Naive thymus-derived CD4-positive, alpha-beta T cell (primary cell): ENCODE measurements at regions of chr3 and their contacts with region 1.

Region 1: DNA sequence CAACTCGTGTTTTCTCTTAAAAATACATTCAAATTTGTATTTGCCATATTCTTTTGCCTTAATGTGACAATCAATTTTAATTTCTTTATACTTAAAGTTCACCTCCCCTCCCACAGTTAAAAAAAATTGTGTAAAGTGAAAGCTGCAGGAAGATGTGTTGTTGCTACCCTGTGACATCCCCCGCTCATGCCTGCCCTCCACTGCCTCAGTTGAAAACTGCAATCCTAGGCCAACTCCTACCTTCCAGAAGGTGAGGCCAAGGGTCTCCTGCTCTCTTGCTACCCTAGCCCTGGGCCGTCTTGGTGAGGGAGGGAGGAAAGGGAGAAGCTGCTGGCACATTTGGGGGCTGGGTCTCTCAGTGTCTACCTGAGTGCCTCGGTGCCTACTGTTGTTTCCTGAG is 57.0 kb upstream of the CMTM7 start:
- DNase-seq: peak; percentile 15 to 72 (median 65)
- ATAC-seq: peak; percentile 83
- H3K4me3 ChIP-seq: no peak overlapping the region
- H3K4me3 Mint-ChIP-seq: peak overlapping the region; percentile 5 to 87 (median 66)
- H3K27ac ChIP-seq: peak overlapping the region; percentile 49
- H3K27ac Mint-ChIP-seq: peak overlapping the region; percentile 78 to 96 (median 92)
- H3K4me1 ChIP-seq: peaks cover 0 to 32% of the 10 kb centered on the region in 2 donors
- H3K4me1 Mint-ChIP-seq: peaks cover 39 to 67% (median 60%) of the 10 kb centered on the region in 7 donors
- H3K27me3 ChIP-seq: no peaks in the 10 kb centered on the region
- H3K27me3 Mint-ChIP-seq: no peaks in the 10 kb centered on the region

Region 2: GRCh38 chr3:32323604-32324285 is 10.9 kb before region 1 on chr3:
- CTCF ChIA-PET with region 1: interaction called, 10 read pairs
- POLR2A ChIA-PET with region 1: interaction called, 4 read pairs
- intact Hi-C with region 1: loop called in 1 of 2 experiments (anchors 1 kb)
- DNase-seq: no peak
- ATAC-seq: no peak
- H3K4me3 ChIP-seq: no peak overlapping the region
- H3K4me3 Mint-ChIP-seq: no peak overlapping the region
- H3K27ac ChIP-seq: no peak overlapping the region
- H3K27ac Mint-ChIP-seq: peak overlapping the region in 3 of 9 donors; percentile 26 to 57 (median 31)
- H3K4me1 ChIP-seq: no peaks in the 10 kb centered on the region
- H3K4me1 Mint-ChIP-seq: peaks cover 11 to 46% (median 24%) of the 10 kb centered on the region in 7 donors
- H3K27me3 ChIP-seq: no peaks in the 10 kb centered on the region
- H3K27me3 Mint-ChIP-seq: no peaks in the 10 kb centered on the region